Naive thymus-derived CD4-positive, alpha-beta T cell (primary cell): ENCODE measurements at regions of chr9 and their contacts with region 1.

Region 1: GRCh38 chr9:137086531-137087408 is at the start of gene MAN1B1:
- DNase-seq: peak; percentile 96 to 100 (median 99)
- ATAC-seq: peak; percentile 92
- H3K4me3 ChIP-seq: peak within 1 kb of the TSS; percentile 73
- H3K4me3 Mint-ChIP-seq: peak within 1 kb of the TSS; percentile 88 to 96 (median 92)
- H3K27ac ChIP-seq: peak within 1 kb of the TSS; percentile 92
- H3K27ac Mint-ChIP-seq: peak within 1 kb of the TSS; percentile 92 to 98 (median 95)
- H3K4me1 ChIP-seq: peaks cover 18% of the 10 kb centered on the region in 2 donors
- H3K4me1 Mint-ChIP-seq: peaks cover 25 to 34% (median 30%) of the 10 kb centered on the region in 7 donors
- H3K27me3 ChIP-seq: no peaks in the 10 kb centered on the region
- H3K27me3 Mint-ChIP-seq: no peaks in the 10 kb centered on the region
- total RNA-seq, gene MAN1B1: 57.3 to 74.2 (median 70.2) TPM

Region 2: GRCh38 chr9:136410500-136411287 is 676.1 kb before region 1 on chr9 and contains the starts of genes ENTR1 and PMPCA:
- CTCF ChIA-PET with region 1: no interaction called
- POLR2A ChIA-PET with region 1: interaction called, 3 read pairs
- intact Hi-C with region 1: loop called in 1 of 2 experiments (anchors 5 kb)
- DNase-seq: peak; percentile 90 to 99 (median 93)
- ATAC-seq: peak; percentile 94
- H3K4me3 ChIP-seq: peak within 1 kb of the TSS; percentile 96
- H3K4me3 Mint-ChIP-seq: peak within 1 kb of the TSS; percentile 83 to 93 (median 90)
- H3K27ac ChIP-seq: peak within 1 kb of the TSS; percentile 97
- H3K27ac Mint-ChIP-seq: peak within 1 kb of the TSS; percentile 78 to 95 (median 90)
- H3K4me1 ChIP-seq: peaks cover 18 to 26% of the 10 kb centered on the region in 2 donors
- H3K4me1 Mint-ChIP-seq: peaks cover 34 to 56% (median 45%) of the 10 kb centered on the region in 7 donors
- H3K27me3 ChIP-seq: no peaks in the 10 kb centered on the region
- H3K27me3 Mint-ChIP-seq: no peaks in the 10 kb centered on the region
- total RNA-seq, gene ENTR1: 56.3 to 89.0 (median 66.6) TPM
- total RNA-seq, gene PMPCA: 60.5 to 86.3 (median 71.6) TPM

Region 3: DNA sequence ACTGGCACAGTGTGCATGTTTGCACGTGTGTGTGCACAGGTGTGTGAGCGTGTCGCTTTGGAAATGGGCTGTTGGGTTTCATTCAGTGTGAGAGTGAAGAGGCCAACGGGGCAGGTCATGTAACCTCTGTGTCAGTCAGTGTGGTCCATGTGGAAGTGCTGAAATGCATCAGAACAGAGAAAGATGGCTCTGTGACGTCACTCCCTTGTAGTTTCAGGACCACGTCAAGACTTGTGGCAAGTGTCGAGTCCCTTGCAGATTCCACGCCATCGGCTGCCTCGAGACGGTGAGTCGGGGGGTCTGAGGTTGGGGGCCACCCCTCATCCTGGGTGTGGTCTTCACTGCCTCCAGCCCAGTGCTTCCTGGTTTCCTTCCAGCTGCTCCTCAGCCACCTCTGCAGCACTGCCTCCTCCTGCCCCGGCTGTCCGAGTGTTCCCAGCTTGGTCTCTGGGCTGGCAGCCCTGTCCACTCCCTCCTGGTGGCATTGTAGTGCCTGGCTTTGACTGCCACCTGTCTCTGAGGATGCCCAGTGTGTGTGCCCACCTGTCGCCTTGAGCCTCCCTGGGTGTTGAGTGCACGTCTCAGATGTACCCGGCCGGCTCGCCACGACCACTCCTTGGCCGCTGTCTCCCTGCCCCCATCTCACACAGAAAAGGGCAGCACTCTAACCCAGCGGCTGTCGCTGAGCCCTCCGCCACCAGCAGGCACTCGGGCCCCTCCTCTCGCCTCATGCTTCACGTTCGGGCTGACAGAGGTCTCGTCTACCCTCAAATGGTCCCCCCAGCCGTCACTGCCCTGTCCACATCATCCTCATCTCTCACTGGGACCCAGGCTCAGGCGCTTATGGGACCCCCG is 170.2 kb before region 1 on chr9:
- CTCF ChIA-PET with region 1: no interaction called
- POLR2A ChIA-PET with region 1: no interaction called
- intact Hi-C with region 1: no loop called
- DNase-seq: no peak
- ATAC-seq: no peak
- H3K4me3 ChIP-seq: no peak overlapping the region
- H3K4me3 Mint-ChIP-seq: no peak overlapping the region
- H3K27ac ChIP-seq: no peak overlapping the region
- H3K27ac Mint-ChIP-seq: peak overlapping the region in 1 of 9 donors; percentile 63
- H3K4me1 ChIP-seq: no peaks in the 10 kb centered on the region
- H3K4me1 Mint-ChIP-seq: peaks cover 0 to 10% (median 4%) of the 10 kb centered on the region in 7 donors
- H3K27me3 ChIP-seq: no peaks in the 10 kb centered on the region
- H3K27me3 Mint-ChIP-seq: no peaks in the 10 kb centered on the region

Region 4: DNA sequence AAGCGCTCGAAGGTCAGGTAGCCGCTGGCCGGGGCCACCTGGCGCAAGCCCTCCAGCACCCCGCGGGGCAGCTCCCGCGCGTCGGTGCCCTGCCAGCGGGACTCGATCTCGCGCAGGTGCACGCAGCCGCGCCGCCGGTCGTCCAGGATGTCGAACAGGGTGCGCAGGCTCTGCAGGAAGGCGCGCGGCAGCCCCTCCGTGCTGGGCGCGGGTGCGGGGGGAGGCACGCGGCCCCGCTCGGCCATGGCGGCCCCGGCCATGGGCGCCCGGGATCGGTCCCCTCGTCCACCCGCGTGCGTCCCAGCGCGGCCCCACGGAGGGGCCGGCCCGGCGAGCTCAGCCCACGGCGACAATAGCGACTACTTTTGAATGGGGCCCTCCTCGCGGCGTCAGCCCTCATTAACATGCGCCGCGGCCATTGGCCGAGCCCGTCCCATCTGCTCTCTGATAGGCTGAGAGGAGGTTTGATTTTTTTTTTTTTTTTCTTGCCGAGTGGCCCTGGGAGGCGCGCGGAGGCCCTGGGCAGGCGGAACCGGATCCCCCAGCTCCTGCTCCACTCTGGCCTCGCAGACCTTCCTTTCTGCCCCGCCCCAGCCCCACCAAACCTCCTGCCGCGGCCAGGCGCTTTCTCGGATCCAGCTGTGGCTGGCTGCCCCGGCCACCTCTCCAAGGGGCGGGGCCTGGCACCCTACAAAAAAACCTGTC is 16.4 kb before region 1 on chr9 and contains the start of gene SAPCD2:
- CTCF ChIA-PET with region 1: interaction called, 5 read pairs
- POLR2A ChIA-PET with region 1: interaction called, 70 read pairs
- intact Hi-C with region 1: loop called (anchors 1 kb)
- DNase-seq: peak; percentile 72 to 88 (median 85)
- ATAC-seq: peak; percentile 94
- H3K4me3 ChIP-seq: peak within 1 kb of the TSS; percentile 27
- H3K4me3 Mint-ChIP-seq: peak within 1 kb of the TSS; percentile 66 to 92 (median 81)
- H3K27ac ChIP-seq: peak within 1 kb of the TSS; percentile 51
- H3K27ac Mint-ChIP-seq: peak within 1 kb of the TSS in 6 of 9 donors; percentile 40 to 86 (median 62)
- H3K4me1 ChIP-seq: peaks cover 11 to 15% of the 10 kb centered on the region in 2 donors
- H3K4me1 Mint-ChIP-seq: peaks cover 10 to 38% (median 12%) of the 10 kb centered on the region in 7 donors
- H3K27me3 ChIP-seq: no peaks in the 10 kb centered on the region
- H3K27me3 Mint-ChIP-seq: no peaks in the 10 kb centered on the region
- total RNA-seq, gene SAPCD2: 0.16 to 22.1 (median 0.74) TPM

Region 5: GRCh38 chr9:137114610-137115391 is 28.0 kb after region 1 on chr9 and contains the start of gene DPP7:
- CTCF ChIA-PET with region 1: no interaction called
- POLR2A ChIA-PET with region 1: interaction called, 21 read pairs
- intact Hi-C with region 1: loop called in 1 of 2 experiments (anchors 1 kb)
- DNase-seq: peak; percentile 63 to 88 (median 80)
- ATAC-seq: peak; percentile 93
- H3K4me3 ChIP-seq: peak within 1 kb of the TSS; percentile 54
- H3K4me3 Mint-ChIP-seq: peak within 1 kb of the TSS; percentile 38 to 82 (median 69)
- H3K27ac ChIP-seq: peak within 1 kb of the TSS; percentile 81
- H3K27ac Mint-ChIP-seq: peak within 1 kb of the TSS in 4 of 9 donors; percentile 24 to 78 (median 40)
- H3K4me1 ChIP-seq: peaks cover 0 to 4% of the 10 kb centered on the region in 2 donors
- H3K4me1 Mint-ChIP-seq: peaks cover 0 to 13% (median 6%) of the 10 kb centered on the region in 7 donors
- H3K27me3 ChIP-seq: no peaks in the 10 kb centered on the region
- H3K27me3 Mint-ChIP-seq: no peaks in the 10 kb centered on the region
- total RNA-seq, gene DPP7: 235 to 328 (median 298) TPM

Region 6: DNA sequence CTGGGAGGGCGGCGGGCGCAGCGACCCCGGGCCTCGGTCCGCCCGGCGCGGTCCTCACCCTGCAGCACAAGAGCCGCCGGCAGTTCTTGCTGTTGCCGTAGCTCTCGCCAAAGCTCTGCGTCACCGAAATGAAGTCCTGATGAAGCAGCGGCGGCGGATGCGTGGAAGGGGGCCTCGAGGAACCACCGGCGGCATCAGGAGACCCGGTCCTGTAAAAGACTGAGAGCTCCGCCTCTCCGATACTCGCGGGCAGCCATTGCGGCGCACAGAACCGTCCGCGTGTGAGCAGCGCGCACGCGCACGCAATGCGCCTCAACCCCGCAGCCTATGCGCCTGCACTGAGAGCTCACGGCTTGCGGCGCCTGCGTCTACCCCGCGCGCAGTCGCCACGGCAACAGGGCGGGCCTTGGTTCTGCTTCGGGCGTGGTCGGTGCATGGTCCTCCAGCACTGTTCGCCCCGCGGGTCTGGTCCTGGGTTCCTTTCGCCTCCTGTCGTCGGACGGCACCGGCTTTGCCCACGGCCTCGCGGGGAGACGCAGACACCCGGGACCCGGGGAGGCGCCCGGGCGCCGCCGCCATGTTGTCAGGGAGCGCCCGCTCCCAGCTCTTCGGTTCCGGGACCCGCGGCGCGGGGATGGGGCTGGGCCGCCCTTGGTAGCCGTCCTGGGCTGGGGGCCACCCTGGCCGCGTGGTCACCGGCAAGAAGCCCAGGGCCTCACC is 42.8 kb after region 1 on chr9:
- CTCF ChIA-PET with region 1: no interaction called
- POLR2A ChIA-PET with region 1: interaction called, 7 read pairs
- intact Hi-C with region 1: loop called (anchors 1 kb)
- DNase-seq: peak; percentile 74 to 93 (median 90)
- ATAC-seq: peak; percentile 98
- H3K4me3 ChIP-seq: peak overlapping the region; percentile 85
- H3K4me3 Mint-ChIP-seq: peak overlapping the region; percentile 83 to 93 (median 90)
- H3K27ac ChIP-seq: peak overlapping the region; percentile 85
- H3K27ac Mint-ChIP-seq: peak overlapping the region; percentile 67 to 88 (median 81)
- H3K4me1 ChIP-seq: peaks cover 21 to 28% of the 10 kb centered on the region in 2 donors
- H3K4me1 Mint-ChIP-seq: peaks cover 23 to 34% (median 27%) of the 10 kb centered on the region in 7 donors
- H3K27me3 ChIP-seq: no peaks in the 10 kb centered on the region
- H3K27me3 Mint-ChIP-seq: peaks cover 9 to 10% (median 9%) of the 10 kb centered on the region in 5 donors